AG04449 (cell line): ENCODE measurements at regions of chr15 and their contacts with region 1.

Region 1: DNA sequence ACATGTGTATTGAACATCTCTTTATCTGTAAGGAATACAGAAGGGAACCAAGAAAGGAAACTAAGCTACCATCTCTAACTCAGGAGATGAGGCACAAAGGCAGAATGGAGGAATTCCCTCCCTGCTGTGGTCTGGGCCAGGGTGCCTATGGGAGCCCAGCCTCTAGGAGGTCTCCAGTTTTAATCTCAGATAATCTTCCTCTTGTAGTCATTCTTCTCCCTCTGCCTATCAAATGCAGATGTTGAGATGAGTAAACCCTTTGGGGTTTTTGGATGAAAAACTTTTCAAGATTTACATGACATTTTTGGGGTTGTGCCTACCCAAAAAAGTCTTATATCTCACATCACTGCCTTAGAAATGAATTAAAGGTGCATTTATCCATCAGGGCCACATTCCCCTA is 23.3 kb downstream of the SCG5 start:
- DNase-seq: no peak
- H3K4me3 ChIP-seq: no peak overlapping the region
- CTCF ChIP-seq: no peak

Region 2: DNA sequence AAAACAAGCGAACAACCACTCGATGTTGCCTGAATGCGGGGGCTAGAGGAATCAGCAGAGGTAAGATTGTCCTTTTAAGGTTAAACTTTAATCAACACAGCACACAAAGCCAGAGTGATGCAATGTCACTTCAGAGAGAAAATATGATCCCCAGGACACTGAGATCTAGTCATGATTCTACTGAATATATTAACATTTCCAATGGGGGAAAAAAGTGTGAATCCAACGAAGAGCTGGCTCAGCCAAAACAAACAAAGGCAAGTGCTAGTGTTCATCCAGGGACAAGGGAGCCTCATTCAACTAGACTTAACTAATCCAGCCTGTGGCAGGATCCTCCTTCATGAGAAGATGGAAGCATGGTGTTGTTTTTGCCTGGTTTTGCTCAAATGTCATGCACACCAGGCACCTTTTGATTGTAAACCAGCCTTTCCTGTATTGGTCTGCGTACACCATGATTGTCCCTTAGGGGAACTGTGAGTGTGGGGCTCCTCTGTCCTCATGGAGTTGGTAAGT is 12.5 kb after region 1 on chr15:
- CTCF ChIA-PET with region 1: interaction called, 22 read pairs
- POLR2A ChIA-PET with region 1: interaction called, 3 read pairs
- DNase-seq: no peak
- H3K4me3 ChIP-seq: no peak overlapping the region
- CTCF ChIP-seq: no peak

Region 3: GRCh38 chr15:32723171-32723948 is 58.6 kb after region 1 on chr15:
- CTCF ChIA-PET with region 1: interaction called, 32 read pairs
- POLR2A ChIA-PET with region 1: interaction called, 9 read pairs
- DNase-seq: no peak
- H3K4me3 ChIP-seq: no peak overlapping the region; the same call in 1 of the 2 replicates
- CTCF ChIP-seq: no peak

Region 4: DNA sequence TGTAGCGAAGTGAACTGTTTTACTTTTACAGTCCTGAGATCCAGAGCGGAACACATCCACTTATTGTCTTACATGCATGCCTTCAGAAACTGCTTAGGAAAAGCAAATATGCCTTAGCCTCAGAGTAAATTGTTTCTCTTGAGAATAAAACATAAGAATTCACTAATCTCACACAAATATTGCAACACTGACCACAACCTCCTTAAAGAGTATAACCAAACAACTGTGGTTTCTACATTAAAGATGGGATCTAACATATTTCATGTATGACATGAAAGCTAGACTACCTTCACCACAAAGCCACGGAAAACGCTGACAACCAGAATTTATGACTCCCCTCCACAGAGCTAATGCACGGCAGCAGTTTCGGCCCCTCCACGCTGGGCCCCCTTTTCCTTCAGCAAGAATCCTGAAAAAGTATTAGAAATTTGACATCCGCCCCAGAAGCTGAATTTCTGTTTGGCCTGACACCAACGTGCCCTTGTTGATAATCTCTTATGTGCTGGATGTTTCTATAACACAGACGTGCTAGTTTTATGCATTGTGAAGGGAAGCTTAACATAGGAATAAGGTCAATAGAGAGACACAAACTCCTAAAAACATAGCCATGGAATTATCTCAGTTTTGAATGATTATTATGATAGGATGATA is 137.6 kb after region 1 on chr15:
- CTCF ChIA-PET with region 1: interaction called, 11 read pairs
- POLR2A ChIA-PET with region 1: no interaction called
- DNase-seq: peak; percentile 89
- H3K4me3 ChIP-seq: no peak overlapping the region
- CTCF ChIP-seq: no peak

Region 5: GRCh38 chr15:32870240-32871033 is 205.6 kb after region 1 on chr15:
- CTCF ChIA-PET with region 1: interaction called, 13 read pairs
- POLR2A ChIA-PET with region 1: interaction called, 4 read pairs
- DNase-seq: peak; percentile 98
- H3K4me3 ChIP-seq: no peak overlapping the region
- CTCF ChIP-seq: no peak

Region 6: DNA sequence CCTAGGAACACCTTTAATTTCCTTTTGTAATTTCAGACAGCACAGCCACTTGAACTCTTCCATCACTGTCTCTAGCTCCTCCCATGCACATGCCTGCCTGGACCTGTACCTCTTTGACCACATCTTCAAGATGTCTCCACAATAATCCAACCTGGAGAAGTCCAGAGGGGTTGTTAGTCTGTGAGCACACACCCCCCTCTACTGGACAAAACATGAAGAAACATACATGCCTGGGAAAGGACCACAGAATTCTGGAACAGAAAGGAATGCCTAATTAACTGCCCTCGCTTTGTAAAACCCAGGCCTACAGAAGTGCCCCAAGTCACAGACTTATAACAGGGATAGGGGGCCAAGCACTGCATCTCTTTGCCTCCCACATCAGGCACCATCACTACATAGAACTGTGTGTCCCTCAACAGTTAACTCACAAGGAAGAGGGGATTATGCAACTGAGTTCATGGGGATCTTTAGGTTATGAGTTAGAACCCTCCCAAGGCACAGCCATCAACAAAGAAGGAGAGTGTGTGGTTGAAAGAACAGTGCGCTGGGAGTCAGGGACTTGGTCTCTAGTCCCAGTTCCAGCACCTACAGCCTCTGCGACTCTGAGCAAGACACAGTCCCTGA is 468.0 kb after region 1 on chr15:
- CTCF ChIA-PET with region 1: interaction called, 22 read pairs
- POLR2A ChIA-PET with region 1: no interaction called
- DNase-seq: no peak
- H3K4me3 ChIP-seq: no peak overlapping the region
- CTCF ChIP-seq: peak; percentile 61